ENCODE measurements at regions of chr19 and their contacts with region 1.

Region 1: DNA sequence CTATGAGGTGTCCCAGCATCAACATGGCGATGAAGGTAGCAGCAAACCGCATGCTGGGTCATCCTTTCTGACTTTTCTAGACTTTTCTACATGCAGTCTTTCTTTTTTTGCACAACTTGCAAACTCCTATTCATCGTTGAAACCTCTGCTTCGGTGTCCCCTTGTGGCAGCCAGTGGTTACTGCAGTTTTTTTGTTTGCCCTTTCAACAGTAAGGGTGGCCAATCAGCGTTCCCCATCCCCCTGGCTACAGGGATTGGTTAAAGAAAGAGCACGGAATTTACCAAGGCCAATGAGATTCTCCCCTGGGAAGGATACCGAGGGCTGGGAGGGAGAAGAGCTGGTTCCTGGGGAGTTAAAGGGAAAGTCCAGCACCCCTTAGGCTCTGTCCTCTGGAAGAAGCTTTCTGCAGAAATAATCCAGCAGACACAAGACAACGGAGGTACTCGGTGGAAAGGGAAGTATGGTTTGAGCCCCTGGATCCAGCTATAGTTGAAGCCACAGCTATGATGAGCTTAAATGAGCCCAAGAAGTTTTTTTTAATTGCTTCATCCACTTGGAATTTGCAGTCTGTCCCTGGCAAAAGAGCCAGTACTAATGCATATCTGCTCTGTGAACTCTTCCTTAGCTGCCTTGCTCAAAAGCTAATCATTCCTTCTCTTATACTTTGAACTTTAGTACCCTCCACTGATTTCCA is 5.6 kb upstream of the LSM4 start:
- DNase-seq: peak; percentile 87 to 91 (median 88)
- H3K4me3 ChIP-seq: no peak overlapping the region
- H3K4me3 Mint-ChIP-seq: peak overlapping the region; percentile 42 to 83 (median 62)
- H3K27ac ChIP-seq: no peak overlapping the region
- H3K27ac Mint-ChIP-seq: peak overlapping the region; percentile 24 to 90 (median 69)
- H3K4me1 ChIP-seq: peaks cover 15% of the 10 kb centered on the region
- H3K4me1 Mint-ChIP-seq: peaks cover 8 to 18% (median 11%) of the 10 kb centered on the region in 4 donors
- H3K27me3 ChIP-seq: no peaks in the 10 kb centered on the region
- H3K27me3 Mint-ChIP-seq: peaks cover 0 to 1% of the 10 kb centered on the region in 2 donors

Region 2: DNA sequence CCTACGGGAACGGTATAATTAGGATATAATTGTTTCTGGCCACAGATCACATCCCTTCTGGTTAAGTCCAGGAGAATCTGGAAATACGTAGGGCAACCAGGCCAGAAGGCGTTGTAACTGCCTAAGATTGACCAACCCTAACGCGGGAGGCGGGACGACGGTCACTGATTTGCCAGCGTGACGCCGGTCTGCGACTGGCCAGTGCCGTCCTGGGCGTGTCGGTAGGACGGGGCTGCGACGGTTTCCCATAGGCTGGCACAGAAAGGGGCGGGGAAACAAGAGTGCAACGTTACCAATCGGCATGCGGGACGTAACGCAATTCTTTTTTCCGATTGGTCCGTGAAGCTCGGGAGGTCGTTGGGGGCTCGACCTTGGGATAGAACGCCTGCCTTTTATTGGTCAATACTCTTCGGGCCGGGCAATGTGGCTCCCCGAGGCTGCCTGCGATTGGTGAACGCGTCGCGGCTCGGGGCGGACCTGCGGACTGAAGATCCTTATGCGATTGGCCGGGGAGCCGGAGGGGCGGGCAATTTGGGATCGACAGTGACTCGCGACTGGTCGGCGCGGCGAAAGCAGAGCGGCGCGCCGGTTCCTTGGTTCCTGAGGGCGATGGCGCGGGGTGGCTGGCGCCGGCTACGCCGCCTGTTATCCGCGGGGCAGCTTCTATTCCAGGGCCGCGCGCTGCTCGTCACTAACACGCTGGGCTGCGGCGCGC is 135.7 kb before region 1 on chr19 and contains the start of gene MPV17L2:
- CTCF ChIA-PET with region 1: interaction called, 7 read pairs
- POLR2A ChIA-PET with region 1: no interaction called
- intact Hi-C with region 1: loop called (anchors 1 kb)
- DNase-seq: peak; percentile 98 to 100 (median 99)
- H3K4me3 ChIP-seq: peak within 1 kb of the TSS; percentile 63 to 83
- H3K4me3 Mint-ChIP-seq: peak within 1 kb of the TSS; percentile 87 to 96 (median 92)
- H3K27ac ChIP-seq: peak within 1 kb of the TSS; percentile 73
- H3K27ac Mint-ChIP-seq: peak within 1 kb of the TSS; percentile 89 to 98 (median 96)
- H3K4me1 ChIP-seq: peaks cover 22% of the 10 kb centered on the region
- H3K4me1 Mint-ChIP-seq: peaks cover 11 to 26% (median 20%) of the 10 kb centered on the region in 4 donors
- H3K27me3 ChIP-seq: no peaks in the 10 kb centered on the region
- H3K27me3 Mint-ChIP-seq: no peaks in the 10 kb centered on the region
- total RNA-seq, gene MPV17L2: 7.6 to 7.8 TPM

Region 3: DNA sequence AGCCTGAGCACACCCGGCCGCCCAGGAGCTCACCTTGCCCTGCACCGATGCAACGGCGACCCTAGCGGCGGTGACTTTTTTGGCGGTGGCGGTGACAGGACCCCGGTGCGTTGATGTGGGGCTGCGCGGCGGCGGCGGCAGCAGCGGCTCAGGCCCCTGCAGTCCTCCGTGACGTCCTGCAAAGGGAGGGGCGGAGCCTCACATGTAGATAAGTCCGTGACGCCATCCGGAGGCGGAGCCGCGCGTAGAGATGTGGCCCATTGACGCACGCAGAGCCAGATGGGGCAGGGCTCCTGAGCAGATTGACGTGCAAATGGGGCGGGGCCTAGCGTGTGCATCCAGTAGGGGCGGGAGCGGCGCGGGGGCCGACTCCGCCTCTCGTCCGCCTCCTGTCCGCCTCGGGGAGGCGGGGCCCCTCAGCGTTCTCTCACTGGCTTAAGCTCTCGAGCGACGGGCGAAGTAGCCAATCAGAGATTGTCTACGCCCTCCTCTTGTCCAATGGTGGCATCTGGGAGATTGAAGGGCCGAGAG is 124.6 kb before region 1 on chr19 and contains the start of gene RAB3A:
- CTCF ChIA-PET with region 1: interaction called, 15 read pairs
- POLR2A ChIA-PET with region 1: interaction called, 4 read pairs
- intact Hi-C with region 1: loop called (anchors 1 kb)
- DNase-seq: peak; percentile 98 to 100 (median 100)
- H3K4me3 ChIP-seq: peak within 1 kb of the TSS; percentile 84 to 93
- H3K4me3 Mint-ChIP-seq: peak within 1 kb of the TSS; percentile 91 to 98 (median 96)
- H3K27ac ChIP-seq: peak within 1 kb of the TSS; percentile 63
- H3K27ac Mint-ChIP-seq: peak within 1 kb of the TSS; percentile 79 to 98 (median 98)
- H3K4me1 ChIP-seq: peaks cover 23% of the 10 kb centered on the region
- H3K4me1 Mint-ChIP-seq: peaks cover 13 to 33% (median 21%) of the 10 kb centered on the region in 4 donors
- H3K27me3 ChIP-seq: no peaks in the 10 kb centered on the region
- H3K27me3 Mint-ChIP-seq: peaks cover 0 to 1% of the 10 kb centered on the region in 2 donors
- total RNA-seq, gene RAB3A: 4.7 to 4.8 TPM

Region 4: DNA sequence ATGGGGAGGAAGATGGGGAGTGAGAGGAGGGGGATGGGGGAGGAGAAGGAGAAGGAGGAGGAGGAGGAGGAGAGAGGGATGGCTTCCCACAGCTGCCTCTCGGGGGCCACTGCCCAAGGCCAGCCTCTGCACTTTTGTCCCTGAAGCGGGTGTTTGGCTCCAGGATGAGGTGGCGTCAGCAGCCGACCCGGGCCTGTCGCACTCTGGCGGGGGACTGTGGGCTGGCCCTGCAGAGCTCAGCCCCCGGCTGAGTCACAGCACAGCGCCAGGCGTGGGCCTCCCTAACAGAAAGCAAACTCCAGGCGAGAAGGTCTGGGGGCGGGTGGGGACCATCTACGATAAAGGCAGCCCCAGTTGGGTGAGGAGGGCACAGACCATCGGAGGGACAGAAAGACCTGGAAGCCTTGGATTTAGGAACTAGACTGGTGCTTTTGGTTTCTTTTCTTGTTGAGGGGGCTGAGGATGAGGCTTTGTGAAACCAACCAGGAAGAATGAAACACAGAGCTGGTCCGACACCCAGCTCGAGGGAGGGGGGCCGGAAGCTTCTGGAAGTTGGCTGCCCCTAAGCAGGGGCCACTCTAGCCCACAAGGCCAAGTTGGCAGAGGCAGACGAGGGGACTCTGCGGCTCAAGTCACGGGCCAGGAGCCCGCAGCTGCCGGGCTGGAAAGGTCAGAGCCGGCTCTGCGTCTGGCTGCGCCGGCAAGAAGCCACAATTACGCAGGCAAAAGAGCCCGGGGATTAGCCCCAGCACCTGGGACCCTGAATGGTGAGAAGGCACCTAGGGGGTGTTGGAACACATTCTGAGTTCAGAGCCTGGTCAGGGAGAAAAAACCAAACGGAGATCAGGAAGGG is 23.8 kb before region 1 on chr19:
- CTCF ChIA-PET with region 1: interaction called, 11 read pairs
- POLR2A ChIA-PET with region 1: interaction called, 19 read pairs
- intact Hi-C with region 1: loop called (anchors 1 kb)
- DNase-seq: peak; percentile 73 to 88 (median 78)
- H3K4me3 ChIP-seq: peak overlapping the region; percentile 82 to 88
- H3K4me3 Mint-ChIP-seq: peak overlapping the region; percentile 89 to 98 (median 95)
- H3K27ac ChIP-seq: peak overlapping the region; percentile 99
- H3K27ac Mint-ChIP-seq: peak overlapping the region; percentile 99 to 100 (median 99)
- H3K4me1 ChIP-seq: peaks cover 70% of the 10 kb centered on the region
- H3K4me1 Mint-ChIP-seq: peaks cover 19 to 54% (median 34%) of the 10 kb centered on the region in 4 donors
- H3K27me3 ChIP-seq: no peaks in the 10 kb centered on the region
- H3K27me3 Mint-ChIP-seq: no peaks in the 10 kb centered on the region

Region 5: DNA sequence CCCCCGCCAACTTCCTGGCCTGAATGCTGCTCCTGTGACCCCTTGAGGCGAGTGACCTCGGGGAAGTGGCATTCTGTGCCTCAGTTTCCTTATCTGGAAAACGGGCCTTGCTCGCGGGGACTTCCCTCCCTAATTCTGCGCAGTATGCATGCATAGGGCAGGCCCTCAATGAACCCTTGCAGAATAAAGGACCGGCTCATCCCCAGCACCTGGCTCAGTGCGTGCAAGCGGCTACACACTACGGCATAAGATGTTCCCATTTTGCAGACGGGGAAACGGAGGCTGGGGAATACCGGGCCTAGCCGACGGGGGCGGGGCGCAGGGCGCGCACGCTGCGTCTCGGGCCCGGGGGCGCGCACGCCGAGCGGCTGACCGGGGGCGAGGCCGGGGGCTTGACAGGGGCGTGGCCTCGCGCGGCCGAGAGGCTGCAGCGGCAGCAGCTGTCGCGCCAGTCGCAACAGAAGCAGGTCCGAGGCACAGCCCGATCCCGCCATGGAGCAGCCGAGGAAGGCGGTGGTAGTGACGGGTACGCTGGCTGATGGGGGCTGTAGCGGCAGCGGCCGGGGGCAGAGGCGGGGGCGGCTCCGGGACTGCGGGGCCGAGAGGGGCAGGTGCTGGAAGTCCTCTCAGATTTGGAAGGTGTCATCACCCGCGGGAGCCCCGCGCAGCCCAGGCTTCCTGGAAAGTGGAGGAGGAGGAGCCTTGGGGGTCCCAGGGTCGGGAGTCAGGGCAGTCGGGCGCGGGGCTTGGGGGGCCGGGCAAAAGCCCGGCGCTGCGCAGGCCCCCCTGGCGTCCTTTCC is 11.9 kb after region 1 on chr19 and contains the start of gene PGPEP1:
- CTCF ChIA-PET with region 1: interaction called, 15 read pairs
- POLR2A ChIA-PET with region 1: interaction called, 12 read pairs
- intact Hi-C with region 1: loop called (anchors 1 kb)
- DNase-seq: peak in 4 of 5 donors; percentile 37 to 68 (median 41)
- H3K4me3 ChIP-seq: peak within 1 kb of the TSS; percentile 61 to 62
- H3K4me3 Mint-ChIP-seq: peak within 1 kb of the TSS; percentile 87 to 94 (median 90)
- H3K27ac ChIP-seq: peak within 1 kb of the TSS; percentile 61
- H3K27ac Mint-ChIP-seq: peak within 1 kb of the TSS; percentile 37 to 95 (median 87)
- H3K4me1 ChIP-seq: peaks cover 24% of the 10 kb centered on the region
- H3K4me1 Mint-ChIP-seq: peaks cover 5 to 25% (median 13%) of the 10 kb centered on the region in 4 donors
- H3K27me3 ChIP-seq: no peaks in the 10 kb centered on the region
- H3K27me3 Mint-ChIP-seq: no peaks in the 10 kb centered on the region
- total RNA-seq, gene PGPEP1: 46.2 to 49.2 TPM

Region 6: DNA sequence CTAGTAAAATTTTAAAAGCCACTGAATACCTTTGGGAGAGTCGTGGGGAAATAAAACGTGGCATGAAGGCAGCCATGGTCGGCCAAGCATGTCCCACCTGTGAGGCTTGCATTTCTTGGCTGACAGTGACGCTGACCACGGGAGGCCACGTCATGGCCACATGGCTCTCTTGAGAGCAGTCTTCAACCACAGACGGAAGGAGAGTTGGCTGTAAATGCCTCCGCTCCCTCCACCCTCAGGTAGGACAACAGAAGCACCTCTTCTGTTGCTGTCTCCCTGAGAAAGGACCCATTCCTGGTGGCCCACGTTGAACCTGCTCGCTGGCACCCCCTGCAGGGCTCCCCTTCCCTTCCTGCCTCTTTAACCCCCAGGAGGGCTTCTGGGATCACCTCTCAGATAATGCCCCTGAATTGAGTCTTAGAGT is 79.6 kb after region 1 on chr19:
- CTCF ChIA-PET with region 1: interaction called, 11 read pairs
- POLR2A ChIA-PET with region 1: no interaction called
- intact Hi-C with region 1: no loop called
- DNase-seq: no peak
- H3K4me3 ChIP-seq: no peak overlapping the region
- H3K4me3 Mint-ChIP-seq: no peak overlapping the region
- H3K27ac ChIP-seq: no peak overlapping the region
- H3K27ac Mint-ChIP-seq: no peak overlapping the region
- H3K4me1 ChIP-seq: no peaks in the 10 kb centered on the region
- H3K4me1 Mint-ChIP-seq: peaks cover 3 to 7% (median 4%) of the 10 kb centered on the region in 4 donors
- H3K27me3 ChIP-seq: no peaks in the 10 kb centered on the region
- H3K27me3 Mint-ChIP-seq: peaks cover 0 to 2% of the 10 kb centered on the region in 2 donors

Region 7: GRCh38 chr19:18419195-18419698 is 90.8 kb after region 1 on chr19 and contains the start of gene SSBP4:
- CTCF ChIA-PET with region 1: interaction called, 5 read pairs
- POLR2A ChIA-PET with region 1: no interaction called
- intact Hi-C with region 1: loop called (anchors 5 kb)
- DNase-seq: peak; percentile 76 to 83 (median 81)
- H3K4me3 ChIP-seq: peak within 1 kb of the TSS; percentile 29 to 64
- H3K4me3 Mint-ChIP-seq: peak within 1 kb of the TSS; percentile 92 to 96 (median 94)
- H3K27ac ChIP-seq: peak within 1 kb of the TSS; percentile 70
- H3K27ac Mint-ChIP-seq: peak within 1 kb of the TSS; percentile 96 to 98 (median 97)
- H3K4me1 ChIP-seq: peaks cover 87% of the 10 kb centered on the region
- H3K4me1 Mint-ChIP-seq: peaks cover 62 to 90% (median 76%) of the 10 kb centered on the region in 4 donors
- H3K27me3 ChIP-seq: no peaks in the 10 kb centered on the region
- H3K27me3 Mint-ChIP-seq: peaks cover 2 to 5% of the 10 kb centered on the region in 2 donors
- total RNA-seq, gene SSBP4: 71.3 to 73.4 TPM